Pancreas (tissue), 10 donors: ENCODE measurements at regions of chr10 and their contacts with region 1.

Region 1: GRCh38 chr10:132788180-132788830 is 2.4 kb upstream of the NKX6-2 start:
- DNase-seq: no peak
- ATAC-seq: peak in 3 of 4 donors; percentile 41 to 63 (median 45)
- H3K4me3 ChIP-seq: no peak overlapping the region
- H3K27ac ChIP-seq: no peak overlapping the region
- H3K4me1 ChIP-seq: peaks cover 0 to 3% (median 0%) of the 10 kb centered on the region in 3 donors
- H3K27me3 ChIP-seq: peaks cover 0 to 36% (median 15%) of the 10 kb centered on the region in 4 donors
- CTCF ChIP-seq: no peak

Region 2: GRCh38 chr10:132654702-132655661 is 133.3 kb before region 1 on chr10:
- intact Hi-C with region 1: loop called in 1 of 3 experiments (anchors 10 kb)
- DNase-seq: peak in 5 of 6 donors; percentile 40 to 85 (median 66)
- ATAC-seq: peak; percentile 55 to 82 (median 76)
- H3K4me3 ChIP-seq: no peak overlapping the region
- H3K27ac ChIP-seq: no peak overlapping the region
- H3K4me1 ChIP-seq: peaks cover 0 to 6% (median 0%) of the 10 kb centered on the region in 3 donors
- H3K27me3 ChIP-seq: no peaks in the 10 kb centered on the region
- CTCF ChIP-seq: peak; percentile 84 to 92 (median 87)

Region 3: DNA sequence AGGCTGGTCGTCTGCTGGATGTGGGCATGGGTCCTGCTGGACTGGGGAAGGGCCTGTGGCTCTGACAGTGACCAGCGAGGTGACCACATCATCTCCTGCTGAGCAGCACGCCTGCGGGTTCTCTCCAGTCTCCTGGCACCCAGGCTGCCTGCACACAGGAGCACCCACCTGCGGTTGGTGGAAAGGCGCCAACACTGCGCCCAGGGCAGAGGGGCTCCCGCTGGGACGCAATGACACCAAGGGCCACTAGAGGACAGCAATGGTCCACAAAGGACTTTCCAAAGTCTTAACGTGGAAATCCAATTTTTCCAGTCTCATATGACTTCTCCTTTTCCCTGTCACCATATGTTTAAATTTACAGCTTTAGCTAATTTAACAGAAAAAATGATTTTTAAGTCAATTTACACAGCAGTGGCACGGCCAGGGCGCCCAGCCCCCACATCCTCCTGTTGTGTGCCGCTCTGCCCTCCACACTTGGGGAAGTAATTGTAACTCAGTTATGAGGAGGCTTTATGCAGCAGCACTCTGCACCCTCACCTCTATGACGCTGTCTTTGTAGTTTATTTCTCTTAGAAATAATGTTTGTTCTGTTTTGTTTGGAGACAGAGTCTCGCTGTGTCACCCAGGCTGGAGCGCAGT is 116.0 kb after region 1 on chr10:
- intact Hi-C with region 1: no loop called
- DNase-seq: peak in 4 of 6 donors; percentile 31 to 64 (median 40)
- ATAC-seq: peak in 3 of 4 donors; percentile 43 to 71 (median 63)
- H3K4me3 ChIP-seq: no peak overlapping the region
- H3K27ac ChIP-seq: no peak overlapping the region
- H3K4me1 ChIP-seq: no peaks in the 10 kb centered on the region
- H3K27me3 ChIP-seq: no peaks in the 10 kb centered on the region
- CTCF ChIP-seq: peak; percentile 31 to 50 (median 45)

Region 4: DNA sequence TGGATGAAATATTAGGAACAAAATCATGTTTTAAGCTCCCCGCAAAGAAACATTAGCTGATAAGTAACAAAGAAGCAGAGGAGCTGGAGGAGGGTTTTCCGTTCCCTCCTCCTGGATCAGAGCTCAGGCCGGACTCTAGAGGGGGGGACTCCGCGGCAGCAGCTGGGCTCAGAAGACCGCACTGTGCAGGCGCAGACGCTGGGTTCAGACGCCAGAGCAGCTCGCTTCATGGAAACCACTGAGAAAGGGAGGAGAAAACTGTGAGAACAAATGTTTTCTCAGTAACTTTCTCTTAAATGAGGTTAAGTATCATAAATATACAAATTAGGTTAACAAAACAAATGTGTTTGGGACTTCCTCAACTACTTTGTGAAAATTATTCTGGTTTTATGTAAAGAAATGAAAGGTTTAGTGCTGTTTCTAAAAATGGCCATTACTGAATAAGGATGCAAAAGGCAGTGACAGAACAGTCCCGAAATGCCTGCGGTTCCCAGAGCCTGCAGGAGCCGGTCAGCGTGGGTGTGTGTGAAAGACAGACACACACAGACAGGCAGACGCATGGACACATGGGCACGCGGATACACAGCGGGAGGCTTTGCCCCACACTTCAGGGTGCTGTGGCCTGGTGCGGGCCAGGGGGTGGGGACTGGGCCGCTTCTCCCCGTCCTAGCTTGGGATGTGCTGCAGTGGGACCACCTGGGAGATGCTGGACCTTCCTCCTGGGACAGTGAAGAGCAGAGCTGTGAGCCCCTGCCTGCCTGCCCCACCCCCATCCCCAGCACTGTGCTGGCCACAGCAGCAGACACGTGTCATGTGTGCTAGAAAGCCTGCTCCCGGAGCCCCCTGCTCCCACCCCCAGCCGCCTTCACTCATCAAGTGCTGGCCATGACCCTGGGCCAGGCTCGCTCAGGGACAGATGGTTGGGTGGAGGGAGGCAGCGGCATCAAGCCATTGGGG is 279.1 kb after region 1 on chr10:
- intact Hi-C with region 1: no loop called
- DNase-seq: peak in 1 of 6 donors; percentile 46
- ATAC-seq: peak in 1 of 4 donors; percentile 41
- H3K4me3 ChIP-seq: no peak overlapping the region
- H3K27ac ChIP-seq: no peak overlapping the region
- H3K4me1 ChIP-seq: no peaks in the 10 kb centered on the region
- H3K27me3 ChIP-seq: no peaks in the 10 kb centered on the region
- CTCF ChIP-seq: no peak